ENCODE measurements at regions of chr17 and their contacts with region 1.

Region 1: DNA sequence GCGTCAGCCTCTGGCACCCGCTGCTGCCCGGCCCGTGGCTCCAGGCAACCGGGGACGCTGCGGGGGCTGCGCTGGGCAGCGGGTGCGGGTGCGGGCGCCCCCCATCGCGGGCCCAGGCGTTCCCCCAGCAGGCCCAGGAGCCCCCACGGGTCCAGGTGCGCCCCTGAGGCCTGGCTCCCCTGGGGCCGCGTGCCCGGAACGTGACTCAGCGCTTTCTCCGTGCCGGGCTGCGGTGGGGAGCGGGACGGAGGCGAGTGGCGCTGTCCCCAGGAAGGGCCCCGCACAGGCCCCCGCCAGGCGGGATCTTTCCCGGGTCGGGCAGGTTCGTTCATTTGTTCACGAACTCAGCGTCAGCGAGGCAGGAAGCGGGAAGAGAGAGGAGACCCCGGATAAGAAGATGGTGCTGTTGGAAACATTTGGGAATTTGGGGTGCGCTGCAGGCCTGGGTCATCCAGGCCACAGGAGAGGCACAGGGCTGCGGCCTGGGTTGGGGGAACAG is 18.4 kb upstream of the EXOC7 start:
- DNase-seq: peak; percentile 78
- H3K4me3 ChIP-seq: peak overlapping the region in 3 of 4 donors; percentile 34 to 51 (median 46)
- H3K27ac ChIP-seq: peak overlapping the region in 2 of 4 donors; percentile 21 to 68
- H3K4me1 ChIP-seq: peaks cover 2 to 11% (median 10%) of the 10 kb centered on the region in 4 donors
- H3K27me3 ChIP-seq: no peaks in the 10 kb centered on the region
- CTCF ChIP-seq: no peak
- EP300 ChIP-seq: no peak
- POLR2A ChIP-seq: no peak

Region 2: DNA sequence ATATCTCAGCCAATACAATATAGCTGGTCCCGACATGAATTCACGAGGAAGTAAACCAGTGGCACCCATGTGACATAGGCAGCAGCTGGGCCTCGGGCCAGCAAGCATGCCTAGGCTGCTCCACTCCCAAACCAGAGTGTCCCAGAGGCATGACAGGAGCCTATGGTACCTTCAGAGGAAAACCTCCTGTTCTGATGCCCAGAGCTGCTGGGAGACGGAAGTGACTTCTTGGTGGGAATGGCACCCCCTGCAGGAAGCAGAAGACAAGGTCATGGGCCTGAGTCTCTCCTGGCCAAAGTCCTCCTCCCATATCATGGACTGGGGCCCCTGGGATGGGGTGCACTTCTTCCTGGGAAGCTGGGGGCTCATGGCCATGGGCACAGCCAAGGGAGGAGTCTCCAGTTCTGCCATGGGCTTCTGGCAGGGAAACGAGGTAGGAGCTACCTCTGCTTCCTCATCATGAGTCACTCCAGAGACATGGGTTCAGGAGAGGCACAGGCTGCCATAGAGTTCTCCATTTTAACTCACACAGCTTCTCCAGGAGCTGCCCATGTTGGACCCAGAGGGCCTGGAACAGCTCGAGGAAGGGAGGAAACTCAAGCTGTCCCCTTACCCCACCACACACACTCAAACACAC is 194.6 kb before region 1 on chr17:
- intact Hi-C with region 1: no loop called
- DNase-seq: no peak
- H3K4me3 ChIP-seq: no peak overlapping the region
- H3K27ac ChIP-seq: no peak overlapping the region
- H3K4me1 ChIP-seq: no peaks in the 10 kb centered on the region
- H3K27me3 ChIP-seq: no peaks in the 10 kb centered on the region
- CTCF ChIP-seq: peak in 1 of 4 experiments; percentile 32
- EP300 ChIP-seq: no peak
- POLR2A ChIP-seq: no peak

Region 3: DNA sequence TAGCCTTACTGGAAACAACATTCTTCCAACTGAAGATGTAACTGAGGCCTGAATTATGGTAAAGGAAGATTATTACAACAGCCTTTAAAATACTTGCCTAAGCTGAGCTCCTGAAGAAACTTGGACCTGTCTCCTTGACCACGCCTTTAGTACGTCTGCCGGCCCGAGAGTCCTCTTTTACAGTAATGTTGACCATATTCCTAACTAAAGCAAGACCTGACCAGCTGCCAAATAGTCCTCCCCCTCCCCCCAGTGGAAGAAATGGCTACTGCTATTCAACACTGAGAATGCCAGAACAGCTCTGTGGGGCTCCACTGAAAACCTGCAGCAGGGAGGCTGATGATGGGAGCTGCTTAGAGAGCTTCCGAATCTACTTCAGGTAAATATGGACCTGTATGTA is 31.7 kb after region 1 on chr17:
- intact Hi-C with region 1: loop called (anchors 2 kb)
- DNase-seq: peak; percentile 69
- H3K4me3 ChIP-seq: no peak overlapping the region
- H3K27ac ChIP-seq: peak overlapping the region in 1 of 4 donors; percentile 18
- H3K4me1 ChIP-seq: peaks cover 0 to 27% (median 19%) of the 10 kb centered on the region in 4 donors
- H3K27me3 ChIP-seq: no peaks in the 10 kb centered on the region
- CTCF ChIP-seq: peak in 2 of 4 experiments; percentile 28 to 35
- EP300 ChIP-seq: no peak
- POLR2A ChIP-seq: no peak

Region 4: GRCh38 chr17:76182016-76182764 is 60.2 kb after region 1 on chr17:
- intact Hi-C with region 1: loop called (anchors 1 kb)
- DNase-seq: peak; percentile 93
- H3K4me3 ChIP-seq: no peak overlapping the region
- H3K27ac ChIP-seq: peak overlapping the region in 1 of 4 donors; percentile 7
- H3K4me1 ChIP-seq: peaks cover 0 to 4% (median 0%) of the 10 kb centered on the region in 4 donors
- H3K27me3 ChIP-seq: no peaks in the 10 kb centered on the region
- CTCF ChIP-seq: peak; percentile 80 to 91 (median 86)
- EP300 ChIP-seq: no peak
- POLR2A ChIP-seq: no peak

Region 5: DNA sequence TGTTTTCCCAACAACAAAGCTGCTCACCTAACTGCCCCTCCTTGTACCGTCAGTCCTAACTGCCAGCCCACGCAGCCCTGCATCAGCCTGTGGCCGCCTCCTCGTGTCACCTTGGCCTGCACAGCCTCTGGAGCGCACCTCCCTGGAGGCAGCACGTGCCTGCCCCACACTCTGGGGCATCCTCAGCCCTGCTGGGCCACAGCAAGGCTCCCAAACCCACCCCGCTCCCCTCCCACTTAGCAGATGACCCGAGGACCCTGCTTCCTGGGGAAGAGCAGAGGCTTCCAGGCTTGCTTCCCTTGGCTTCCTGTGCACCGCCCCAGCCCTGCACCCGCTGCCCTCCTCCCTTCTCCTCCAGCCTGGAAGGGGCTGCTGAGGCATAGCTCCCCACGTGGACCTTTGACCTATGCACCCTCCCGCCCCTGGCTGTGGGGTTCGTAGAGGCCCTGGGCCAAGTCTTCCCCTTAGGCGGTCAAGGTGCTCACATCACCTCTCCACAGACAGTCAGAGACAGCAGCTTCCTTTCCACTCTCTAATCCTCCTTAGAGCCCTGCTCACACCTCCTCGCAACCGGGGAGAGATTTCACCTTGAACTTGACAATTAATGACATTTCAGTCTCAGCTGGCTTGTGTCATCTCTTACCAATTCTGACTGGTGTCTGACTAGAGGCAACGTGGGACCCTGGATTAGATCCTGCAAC is 861.2 kb after region 1 on chr17:
- intact Hi-C with region 1: no loop called
- DNase-seq: no peak
- H3K4me3 ChIP-seq: no peak overlapping the region
- H3K27ac ChIP-seq: no peak overlapping the region
- H3K4me1 ChIP-seq: no peaks in the 10 kb centered on the region
- H3K27me3 ChIP-seq: peaks cover 0 to 19% (median 0%) of the 10 kb centered on the region in 3 donors
- CTCF ChIP-seq: no peak
- EP300 ChIP-seq: no peak
- POLR2A ChIP-seq: no peak

Measured in sigmoid colon (tissue), 7 donors.